ENCODE measurements at regions of chr10 and their contacts with region 1.

Region 1: DNA sequence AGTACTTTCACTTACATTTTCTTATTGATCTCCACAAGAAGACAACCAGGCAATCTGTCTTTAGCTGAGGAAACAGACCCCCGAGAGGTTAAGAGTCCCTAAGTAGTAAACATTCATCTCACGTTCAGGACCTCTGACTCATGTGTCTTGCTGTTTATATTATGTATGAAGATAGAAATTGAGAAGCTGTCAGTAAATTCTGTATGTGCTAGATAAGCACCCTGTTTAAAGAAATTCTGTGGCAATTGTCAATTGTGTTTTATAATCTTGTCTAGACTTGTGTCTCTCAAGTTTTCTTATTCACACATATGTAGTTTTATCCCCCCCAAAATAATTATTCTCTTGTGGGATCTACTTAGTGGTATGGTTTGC is 14.5 kb downstream of the ADK start:
- DNase-seq: no peak
- CTCF ChIP-seq: no peak

Region 2: GRCh38 chr10:74151056-74151878 is 14.2 kb before region 1 on chr10 and contains the start of gene ADK:
- CTCF ChIA-PET with region 1: interaction called, 11 read pairs
- POLR2A ChIA-PET with region 1: interaction called, 4 read pairs
- DNase-seq: peak; percentile 99
- CTCF ChIP-seq: peak; percentile 38

Measured in GM10248 (cell line).